HEK293T (cell line): ENCODE measurements at regions of chr1 and their contacts with region 1.

Region 1: GRCh38 chr1:201361652-201362504 is 15.6 kb downstream of the TNNT2 start:
- DNase-seq: peak; percentile 91

Region 2: DNA sequence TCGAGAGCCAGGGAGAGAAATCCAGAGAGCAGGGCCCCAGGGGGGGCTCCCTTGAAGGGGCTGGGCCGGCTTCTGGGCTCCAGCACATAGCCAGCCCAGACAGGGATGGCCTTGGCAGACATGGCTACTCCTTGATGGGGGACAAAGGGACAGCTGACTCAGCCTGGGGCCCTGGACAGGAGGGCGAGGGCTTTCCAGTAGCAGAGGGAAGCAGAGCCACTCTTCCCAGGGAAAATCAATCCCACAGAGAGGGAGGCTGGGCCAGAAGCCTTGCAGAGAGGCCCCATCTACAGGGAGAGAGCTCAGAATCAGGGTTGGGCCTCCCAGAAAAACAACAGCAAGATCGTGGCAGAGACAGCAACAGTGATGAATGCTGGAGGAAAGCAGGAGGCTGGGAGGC is 155.7 kb before region 1 on chr1:
- CTCF ChIA-PET with region 1: no interaction called
- POLR2A ChIA-PET with region 1: no interaction called
- DNase-seq: no peak

Region 3: DNA sequence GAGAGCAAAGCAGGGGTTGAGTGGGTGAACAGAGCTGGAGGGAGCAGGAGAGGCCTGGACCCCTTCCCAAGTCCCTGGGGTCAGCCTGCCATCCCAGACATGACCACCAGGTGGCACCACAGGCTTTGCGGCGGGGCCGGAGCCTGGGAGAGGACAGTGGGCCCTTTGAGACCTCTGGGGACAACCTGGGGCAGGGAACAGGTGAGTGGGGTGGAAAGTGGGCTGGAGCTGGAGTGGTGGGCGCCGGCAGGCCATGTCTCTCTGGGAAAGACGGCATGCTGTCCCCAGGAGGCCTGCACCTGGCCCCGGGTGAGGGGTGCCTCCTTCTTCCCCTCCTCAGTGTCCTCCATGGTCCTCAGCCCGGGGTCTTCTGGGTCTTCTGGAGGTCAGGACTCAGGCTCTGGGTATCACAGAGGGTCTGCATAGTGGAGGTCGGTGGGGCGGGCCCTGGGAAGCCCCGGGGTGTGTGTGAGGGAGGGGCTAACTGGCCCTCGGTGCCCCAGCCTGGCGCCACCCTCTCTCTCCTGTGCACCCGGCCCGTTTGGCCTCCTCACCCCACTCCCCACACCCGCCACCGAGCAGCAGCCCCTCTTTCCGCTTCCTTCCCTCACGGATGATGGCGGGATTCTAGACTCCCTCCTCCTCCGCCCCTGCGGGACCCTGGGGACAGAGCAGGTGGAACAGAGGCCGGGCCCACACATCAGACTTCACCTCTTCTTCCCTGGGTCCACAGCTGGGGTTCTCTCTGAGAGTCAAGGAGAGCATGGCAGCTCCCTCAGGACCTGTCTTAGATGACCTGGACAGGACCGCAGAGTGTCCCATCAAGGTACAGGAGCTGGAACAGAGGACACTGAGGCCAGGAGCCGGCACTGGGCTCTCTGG is 107.0 kb before region 1 on chr1:
- CTCF ChIA-PET with region 1: interaction called, 24 read pairs
- POLR2A ChIA-PET with region 1: interaction called, 3 read pairs
- DNase-seq: peak; percentile 95

Region 4: GRCh38 chr1:201348211-201348566 is 13.7 kb before region 1 on chr1:
- CTCF ChIA-PET with region 1: interaction called, 10 read pairs
- POLR2A ChIA-PET with region 1: no interaction called
- DNase-seq: peak; percentile 83

Region 5: DNA sequence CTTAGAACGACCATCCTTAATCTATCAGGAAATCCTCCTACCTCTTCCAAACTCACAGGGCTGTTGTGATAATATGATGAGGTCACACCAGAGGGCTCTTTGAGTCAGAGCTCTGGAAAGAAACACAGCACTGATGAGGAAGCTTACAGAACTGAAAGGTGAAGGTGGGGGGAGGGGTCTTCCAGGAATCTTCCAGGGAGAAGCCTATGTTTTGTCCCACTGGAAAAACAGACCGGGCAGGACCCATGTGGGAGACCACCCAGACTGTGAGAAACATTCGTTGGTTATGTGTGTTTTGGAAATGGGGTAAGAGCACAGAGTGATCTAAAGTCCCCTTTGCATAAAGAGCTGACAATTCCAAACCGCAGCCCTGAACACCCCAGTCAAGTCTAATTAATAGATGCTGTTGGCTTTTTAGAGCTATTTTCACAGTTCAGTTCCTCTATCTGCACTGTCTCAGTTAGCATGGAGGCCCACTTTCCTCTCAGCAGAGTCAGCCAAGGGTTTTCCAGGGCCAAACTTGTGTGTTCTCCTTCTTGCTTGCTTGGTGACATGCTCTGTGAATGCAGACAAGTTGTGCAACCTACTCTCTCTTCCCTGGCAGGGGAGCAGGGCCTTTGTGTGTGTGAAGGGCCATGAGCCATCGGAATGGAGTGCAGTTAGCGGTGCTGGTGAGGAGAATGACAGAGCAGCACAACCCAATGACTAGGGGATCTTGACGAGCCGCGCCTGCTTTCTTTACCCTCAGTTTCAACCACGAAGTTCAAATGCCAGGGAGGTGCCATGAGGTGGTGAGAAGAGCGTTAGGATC is 94.8 kb after region 1 on chr1:
- CTCF ChIA-PET with region 1: no interaction called
- POLR2A ChIA-PET with region 1: no interaction called
- DNase-seq: no peak